Naive thymus-derived CD4-positive, alpha-beta T cell (primary cell): ENCODE measurements at regions of chr18 and their contacts with region 1.

Region 1: GRCh38 chr18:63186520-63187222 is 132.9 kb downstream of the BCL2 start:
- DNase-seq: no peak
- ATAC-seq: no peak
- H3K4me3 ChIP-seq: no peak overlapping the region
- H3K4me3 Mint-ChIP-seq: peak overlapping the region in 8 of 10 donors; percentile 1 to 52 (median 14)
- H3K27ac ChIP-seq: no peak overlapping the region
- H3K27ac Mint-ChIP-seq: peak overlapping the region in 8 of 9 donors; percentile 8 to 86 (median 54)
- H3K4me1 ChIP-seq: peaks cover 6 to 31% of the 10 kb centered on the region in 2 donors
- H3K4me1 Mint-ChIP-seq: peaks cover 50 to 91% (median 80%) of the 10 kb centered on the region in 7 donors
- H3K27me3 ChIP-seq: no peaks in the 10 kb centered on the region
- H3K27me3 Mint-ChIP-seq: no peaks in the 10 kb centered on the region

Region 2: DNA sequence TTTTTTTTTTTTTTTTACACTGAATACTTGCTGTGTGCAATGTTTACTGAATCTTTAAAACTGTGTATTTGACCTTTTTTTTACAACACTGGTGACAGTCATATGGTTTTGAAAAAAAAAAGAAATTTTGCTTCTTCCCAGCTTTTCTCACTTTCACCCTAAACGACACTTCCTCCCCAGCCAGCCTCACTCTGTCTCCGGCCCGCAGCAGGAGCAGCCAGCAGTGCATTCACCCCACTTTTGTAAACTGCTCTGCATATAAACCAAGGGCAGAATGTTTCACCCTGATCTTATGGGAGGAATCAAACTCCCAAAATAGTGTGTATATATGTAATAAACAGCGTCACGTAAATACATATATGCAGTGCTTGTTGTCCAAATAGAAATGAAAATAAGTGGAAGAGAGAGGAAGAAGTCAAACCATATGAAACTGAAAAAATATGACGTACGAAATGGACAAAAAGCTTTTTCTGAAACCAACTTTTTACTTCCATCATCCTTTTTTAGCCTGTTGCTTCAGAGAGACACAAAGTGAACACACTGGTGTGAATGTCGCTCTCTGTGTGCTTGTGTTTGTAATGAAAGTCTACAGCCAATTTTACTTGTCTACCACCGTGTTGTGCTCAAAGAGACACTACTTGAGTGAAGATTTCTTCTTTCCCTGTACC is 609.7 kb before region 1 on chr18:
- CTCF ChIA-PET with region 1: no interaction called
- POLR2A ChIA-PET with region 1: no interaction called
- intact Hi-C with region 1: no loop called
- DNase-seq: no peak
- ATAC-seq: no peak
- H3K4me3 ChIP-seq: no peak overlapping the region
- H3K4me3 Mint-ChIP-seq: no peak overlapping the region
- H3K27ac ChIP-seq: no peak overlapping the region
- H3K27ac Mint-ChIP-seq: peak overlapping the region in 3 of 9 donors; percentile 31 to 86 (median 64)
- H3K4me1 ChIP-seq: no peaks in the 10 kb centered on the region
- H3K4me1 Mint-ChIP-seq: peaks cover 0 to 30% (median 4%) of the 10 kb centered on the region in 7 donors
- H3K27me3 ChIP-seq: no peaks in the 10 kb centered on the region
- H3K27me3 Mint-ChIP-seq: no peaks in the 10 kb centered on the region

Region 3: DNA sequence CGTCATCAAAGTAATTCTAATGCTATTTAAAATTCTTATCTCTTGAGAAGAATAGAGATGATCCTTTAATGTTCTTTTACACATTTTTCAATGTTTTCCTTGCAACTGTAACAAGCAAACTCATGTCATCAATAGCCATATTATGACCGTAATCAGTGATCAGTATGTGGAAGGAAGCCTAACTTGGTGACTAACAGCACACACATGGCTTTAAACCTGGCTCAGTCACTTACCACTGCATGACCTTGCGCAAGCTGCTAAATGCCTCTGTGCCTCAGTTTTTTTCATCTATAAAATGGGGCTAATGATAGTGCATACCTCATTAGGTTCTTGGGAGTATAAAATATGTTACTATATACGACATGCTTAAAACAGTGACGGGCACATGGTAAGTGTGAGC is 16.8 kb before region 1 on chr18:
- CTCF ChIA-PET with region 1: interaction called, 3 read pairs
- POLR2A ChIA-PET with region 1: interaction called, 39 read pairs
- intact Hi-C with region 1: loop called (anchors 1 to 2 kb)
- DNase-seq: no peak
- ATAC-seq: no peak
- H3K4me3 ChIP-seq: no peak overlapping the region
- H3K4me3 Mint-ChIP-seq: no peak overlapping the region
- H3K27ac ChIP-seq: no peak overlapping the region
- H3K27ac Mint-ChIP-seq: peak overlapping the region in 4 of 9 donors; percentile 26 to 79 (median 59)
- H3K4me1 ChIP-seq: peaks cover 0 to 23% of the 10 kb centered on the region in 2 donors
- H3K4me1 Mint-ChIP-seq: peaks cover 33 to 81% (median 69%) of the 10 kb centered on the region in 7 donors
- H3K27me3 ChIP-seq: no peaks in the 10 kb centered on the region
- H3K27me3 Mint-ChIP-seq: no peaks in the 10 kb centered on the region

Region 4: DNA sequence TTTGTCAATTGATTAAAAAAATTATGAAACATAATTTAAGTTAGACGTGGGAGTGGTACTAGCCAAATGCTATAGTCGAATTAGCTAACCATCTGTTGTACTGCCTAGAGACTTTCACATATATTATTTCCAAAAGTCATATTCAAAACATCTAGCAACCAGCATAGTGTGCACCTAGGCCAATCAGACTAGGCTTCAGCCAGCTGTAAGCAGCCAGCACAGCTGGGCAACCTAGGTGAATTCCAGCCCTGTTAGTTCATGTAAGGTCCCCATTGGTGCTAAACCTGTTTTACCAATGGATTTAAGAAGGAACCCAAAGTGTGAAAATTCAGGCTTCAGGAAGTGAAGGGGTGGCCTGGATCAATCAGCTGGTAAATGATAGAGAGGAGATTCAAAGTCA is 11.4 kb before region 1 on chr18:
- CTCF ChIA-PET with region 1: interaction called, 5 read pairs
- POLR2A ChIA-PET with region 1: interaction called, 7 read pairs
- intact Hi-C with region 1: loop called (anchors 1 to 2 kb)
- DNase-seq: no peak
- ATAC-seq: peak; percentile 37
- H3K4me3 ChIP-seq: no peak overlapping the region
- H3K4me3 Mint-ChIP-seq: peak overlapping the region in 1 of 10 donors; percentile 23
- H3K27ac ChIP-seq: peak overlapping the region; percentile 19
- H3K27ac Mint-ChIP-seq: peak overlapping the region in 8 of 9 donors; percentile 7 to 89 (median 63)
- H3K4me1 ChIP-seq: peaks cover 0 to 7% of the 10 kb centered on the region in 2 donors
- H3K4me1 Mint-ChIP-seq: peaks cover 31 to 77% (median 66%) of the 10 kb centered on the region in 7 donors
- H3K27me3 ChIP-seq: no peaks in the 10 kb centered on the region
- H3K27me3 Mint-ChIP-seq: no peaks in the 10 kb centered on the region